ENCODE measurements at regions of chr12 and their contacts with region 1.

Region 1: DNA sequence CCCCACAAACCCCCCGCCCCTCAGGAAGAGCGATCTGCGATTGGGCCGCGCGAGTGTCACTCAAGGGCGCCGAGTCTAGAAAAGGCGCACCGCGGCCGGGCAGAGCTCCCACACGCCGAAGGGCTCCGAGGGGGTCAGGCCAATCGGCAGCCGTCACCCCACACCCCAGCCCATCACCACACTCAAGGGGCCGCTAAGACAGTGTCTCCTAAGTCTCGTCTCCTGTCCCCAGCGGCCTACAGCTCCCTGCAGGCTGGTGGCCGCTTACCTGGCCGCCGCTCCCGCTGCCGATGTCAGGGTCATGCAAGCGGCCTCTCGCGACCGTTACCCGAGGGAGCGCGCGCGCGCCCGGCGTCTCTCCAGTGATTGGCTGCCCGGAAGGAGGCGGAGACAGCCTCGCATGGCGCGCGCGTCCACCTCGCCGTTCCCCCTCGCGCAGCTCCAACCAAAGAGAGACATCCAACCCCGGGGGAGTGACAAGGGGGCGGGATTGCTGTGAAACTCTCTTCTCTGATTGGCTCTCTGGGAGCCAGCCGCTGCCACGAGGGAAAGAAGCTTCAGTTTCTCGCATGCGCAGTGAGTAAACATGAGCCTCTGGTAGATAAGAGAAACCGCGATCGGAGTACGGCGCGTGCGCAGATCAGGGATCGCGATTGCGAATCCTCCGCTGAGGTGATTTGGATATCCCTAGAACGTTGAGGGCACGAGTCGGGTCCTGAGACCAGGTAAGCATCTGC is at the starts of genes MPHOSPH9 and MTRFR:
- DNase-seq: peak; percentile 99 to 100 (median 100)
- H3K4me3 ChIP-seq: peak within 1 kb of the TSS; percentile 82 to 99 (median 97)
- H3K27ac ChIP-seq: peak within 1 kb of the TSS; percentile 85 to 95
- H3K4me1 ChIP-seq: peaks cover 38 to 65% (median 53%) of the 10 kb centered on the region in 4 experiments
- H3K27me3 ChIP-seq: no peaks in the 10 kb centered on the region

Region 2: GRCh38 chr12:123270214-123271000 is 37.4 kb after region 1 on chr12:
- CTCF ChIA-PET with region 1: interaction called, 11 read pairs
- POLR2A ChIA-PET with region 1: interaction called, 17 read pairs
- DNase-seq: peak in 1 of 3 donors; percentile 12
- H3K4me3 ChIP-seq: peak overlapping the region; percentile 63 to 91 (median 77)
- H3K27ac ChIP-seq: peak overlapping the region; percentile 51 to 81
- H3K4me1 ChIP-seq: peaks cover 2 to 52% (median 47%) of the 10 kb centered on the region in 4 experiments
- H3K27me3 ChIP-seq: no peaks in the 10 kb centered on the region

Measured in common myeloid progenitor, CD34-positive (primary cell).